ENCODE measurements at regions of chr9 and their contacts with region 1.

Region 1: GRCh38 chr9:109012876-109013678 is at the start of gene CTNNAL1:
- DNase-seq: peak; percentile 81 to 98
- H3K4me3 ChIP-seq: peak within 1 kb of the TSS; percentile 87 to 98
- H3K27ac ChIP-seq: peak within 1 kb of the TSS; percentile 94 to 99
- H3K4me1 ChIP-seq: peaks cover 0 to 14% of the 10 kb centered on the region in 2 donors
- H3K27me3 ChIP-seq: no peaks in the 10 kb centered on the region
- CTCF ChIP-seq: no peak
- total RNA-seq, gene CTNNAL1: 16.4 TPM

Region 2: DNA sequence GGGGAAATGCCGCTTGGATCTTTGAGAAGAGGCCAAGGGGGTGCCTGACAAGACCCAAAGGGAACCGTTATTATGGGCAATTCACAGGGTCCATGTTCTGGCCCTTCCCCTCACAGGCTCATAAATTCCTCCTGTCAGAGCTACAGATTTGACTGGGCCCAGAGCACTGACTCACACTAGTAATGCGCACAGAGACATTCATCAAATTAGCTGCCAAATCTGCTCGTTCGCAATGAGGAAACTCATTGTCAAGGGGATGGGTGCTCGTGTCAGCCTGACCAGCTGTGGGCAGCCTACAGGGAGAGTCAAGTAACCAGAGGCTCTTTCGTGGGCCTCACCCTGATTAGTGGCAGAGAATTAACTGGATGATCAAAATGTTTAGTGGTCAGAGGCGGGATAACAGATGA is 534.6 kb before region 1 on chr9:
- intact Hi-C with region 1: loop called (anchors 5 kb)
- DNase-seq: peak; percentile 25 to 83
- H3K4me3 ChIP-seq: peak overlapping the region in 1 of 2 donors; percentile 38
- H3K27ac ChIP-seq: peak overlapping the region; percentile 88 to 91
- H3K4me1 ChIP-seq: peaks cover 3 to 19% of the 10 kb centered on the region in 2 donors
- H3K27me3 ChIP-seq: no peaks in the 10 kb centered on the region
- CTCF ChIP-seq: no peak

Region 3: GRCh38 chr9:108933718-108934322 is 79.3 kb before region 1 on chr9 and contains the start of gene ELP1:
- intact Hi-C with region 1: loop called (anchors 1 kb)
- DNase-seq: peak; percentile 79 to 96
- H3K4me3 ChIP-seq: peak within 1 kb of the TSS; percentile 80 to 89
- H3K27ac ChIP-seq: peak within 1 kb of the TSS; percentile 89 to 91
- H3K4me1 ChIP-seq: peaks cover 0 to 14% of the 10 kb centered on the region in 2 donors
- H3K27me3 ChIP-seq: no peaks in the 10 kb centered on the region
- CTCF ChIP-seq: peak; percentile 7 to 29 (median 13)
- total RNA-seq, gene ELP1: 8.8 TPM

Region 4: DNA sequence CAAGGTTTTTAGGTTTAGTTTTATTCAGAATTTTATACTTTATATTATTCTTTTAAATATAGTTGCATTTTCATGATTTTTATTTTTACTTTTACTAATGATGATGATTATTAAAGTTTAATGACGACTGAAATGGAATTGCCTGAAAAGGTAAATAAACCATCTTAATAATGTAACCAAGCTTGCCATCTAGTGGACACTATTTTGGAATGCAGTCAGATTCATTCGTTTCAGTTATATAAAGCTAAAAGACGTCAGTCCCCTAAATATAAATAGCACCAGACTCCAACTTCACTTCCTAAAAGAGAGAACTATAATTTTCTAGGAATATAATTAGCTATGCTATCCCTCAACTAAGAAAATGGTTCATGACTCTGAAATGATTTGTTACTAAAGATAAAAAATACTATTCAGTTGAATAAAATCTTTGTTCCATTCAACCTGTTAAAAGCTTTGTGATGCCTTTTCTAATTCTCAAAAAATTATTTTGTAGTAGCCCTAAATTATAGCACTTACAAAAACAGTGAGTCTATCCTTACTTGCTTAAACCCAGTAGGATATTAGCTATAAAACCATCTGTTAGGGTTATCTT is 59.0 kb before region 1 on chr9:
- intact Hi-C with region 1: loop called (anchors 5 kb)
- DNase-seq: no peak
- H3K4me3 ChIP-seq: peak overlapping the region in 1 of 2 donors; percentile 11
- H3K27ac ChIP-seq: peak overlapping the region; percentile 78 to 79
- H3K4me1 ChIP-seq: no peaks in the 10 kb centered on the region
- H3K27me3 ChIP-seq: no peaks in the 10 kb centered on the region
- CTCF ChIP-seq: peak; percentile 60 to 68 (median 64)

Region 5: DNA sequence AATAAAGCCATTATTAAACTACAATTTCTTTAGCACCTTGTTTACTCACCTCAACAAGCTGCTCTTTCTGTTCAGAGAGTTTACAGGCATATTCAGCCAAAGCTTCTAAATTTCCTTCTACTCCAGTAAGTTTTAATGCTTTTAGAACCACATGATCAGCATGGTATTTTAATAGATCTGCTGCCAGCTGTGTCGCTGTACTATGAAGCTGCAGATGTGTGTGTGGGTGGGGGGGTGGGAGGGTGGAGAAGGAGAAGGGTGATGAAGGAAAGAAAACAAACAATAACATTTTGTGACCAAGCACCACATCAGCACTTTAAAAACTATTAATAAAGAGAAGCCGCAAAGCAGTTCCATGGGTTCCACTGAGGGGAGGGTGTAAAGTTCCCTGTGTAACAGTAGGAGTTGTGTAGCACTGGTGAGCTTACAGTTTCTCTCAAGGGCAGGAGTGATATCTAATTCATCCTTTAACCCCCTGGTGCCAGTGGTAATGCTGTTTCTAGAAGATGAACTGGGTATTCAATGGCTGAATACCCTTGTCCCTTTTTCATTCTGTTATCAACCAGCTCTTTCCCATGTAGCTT is 40.4 kb before region 1 on chr9:
- intact Hi-C with region 1: loop called (anchors 5 kb)
- DNase-seq: no peak
- H3K4me3 ChIP-seq: no peak overlapping the region
- H3K27ac ChIP-seq: peak overlapping the region; percentile 42 to 65
- H3K4me1 ChIP-seq: peaks cover 0 to 24% of the 10 kb centered on the region in 2 donors
- H3K27me3 ChIP-seq: no peaks in the 10 kb centered on the region
- CTCF ChIP-seq: no peak

Region 6: GRCh38 chr9:109035684-109036423 is 22.8 kb after region 1 on chr9:
- intact Hi-C with region 1: loop called (anchors 2 kb)
- DNase-seq: peak in 1 of 2 donors; percentile 74
- H3K4me3 ChIP-seq: no peak overlapping the region
- H3K27ac ChIP-seq: peak overlapping the region in 1 of 2 donors; percentile 55
- H3K4me1 ChIP-seq: peaks cover 0 to 11% of the 10 kb centered on the region in 2 donors
- H3K27me3 ChIP-seq: no peaks in the 10 kb centered on the region
- CTCF ChIP-seq: no peak

Region 7: GRCh38 chr9:109119439-109120203 is 106.5 kb after region 1 on chr9 and contains the start of gene TMEM245:
- intact Hi-C with region 1: loop called (anchors 1 kb)
- DNase-seq: peak; percentile 94 to 98
- H3K4me3 ChIP-seq: peak within 1 kb of the TSS; percentile 83 to 98
- H3K27ac ChIP-seq: peak within 1 kb of the TSS; percentile 56 to 77
- H3K4me1 ChIP-seq: peaks cover 9 to 34% of the 10 kb centered on the region in 2 donors
- H3K27me3 ChIP-seq: no peaks in the 10 kb centered on the region
- CTCF ChIP-seq: no peak
- total RNA-seq, gene TMEM245: 49.7 TPM

Region 8: DNA sequence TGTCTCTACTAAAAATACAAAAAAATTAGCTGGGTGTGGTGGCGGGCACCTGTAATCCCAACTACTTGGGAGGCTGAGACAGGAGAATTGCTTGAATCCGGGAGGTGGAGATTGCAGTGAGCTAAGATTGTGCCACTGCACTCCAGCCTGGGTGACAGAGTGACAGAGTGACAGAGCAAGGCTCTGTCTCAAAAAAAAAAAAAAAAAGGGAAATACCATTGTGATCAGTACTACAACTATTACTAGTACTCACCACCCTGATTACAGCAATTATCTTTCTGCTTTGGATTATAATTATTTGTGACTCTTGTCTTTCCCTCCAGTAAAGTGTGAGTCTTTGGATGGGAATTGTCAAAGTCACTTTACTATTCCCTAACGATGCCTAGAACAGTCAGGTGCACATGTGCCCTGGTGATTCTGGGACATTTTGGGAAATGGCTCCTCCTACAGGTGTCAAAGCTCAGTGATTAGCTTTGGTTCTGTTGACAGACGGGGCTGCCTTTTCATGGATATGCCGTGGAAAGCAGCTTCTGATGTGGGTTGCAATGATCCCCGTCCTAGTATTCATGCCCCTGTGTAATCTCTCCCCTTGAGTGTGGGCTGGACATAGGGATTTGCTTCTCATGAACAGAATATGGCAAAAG is 185.8 kb after region 1 on chr9:
- intact Hi-C with region 1: no loop called
- DNase-seq: no peak
- H3K4me3 ChIP-seq: no peak overlapping the region
- H3K27ac ChIP-seq: no peak overlapping the region
- H3K4me1 ChIP-seq: no peaks in the 10 kb centered on the region
- H3K27me3 ChIP-seq: no peaks in the 10 kb centered on the region
- CTCF ChIP-seq: peak in 1 of 3 experiments; percentile 8

Measured in ascending aorta (tissue), 2 donors.